GM12878 (cell line): ENCODE measurements at regions of chr6 and their contacts with region 1.

Region 1: DNA sequence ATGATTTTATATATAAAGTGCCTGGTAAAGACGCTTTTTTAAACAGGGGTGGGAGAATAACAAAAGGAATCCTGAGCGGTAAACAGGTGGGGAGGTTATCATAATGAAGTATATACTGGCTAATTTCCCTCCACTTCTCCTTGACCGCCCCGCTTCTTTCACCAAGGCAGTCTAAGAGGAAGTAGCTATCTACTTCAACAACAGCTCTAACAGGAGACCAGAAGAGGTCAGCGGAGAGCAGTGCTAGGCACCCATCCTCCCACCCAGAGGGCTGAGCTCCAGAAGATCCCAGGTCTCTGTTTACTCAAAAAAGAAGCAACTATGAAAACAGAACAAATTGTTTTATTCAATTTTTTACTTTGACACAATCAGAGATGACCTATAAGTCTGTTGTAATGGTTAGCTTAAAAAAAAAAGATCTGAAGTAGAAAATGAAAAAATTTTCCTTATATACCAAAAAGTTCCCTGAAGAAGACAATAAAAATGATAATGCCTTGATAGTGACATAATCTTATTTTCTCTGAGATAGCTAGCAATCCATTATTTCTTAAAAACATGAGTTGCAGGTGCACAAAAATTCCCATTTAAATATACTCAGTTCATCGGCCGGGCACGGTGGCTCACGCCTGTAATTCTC is 141.1 kb downstream of the PDSS2 start:
- DNase-seq: peak; percentile 7
- ATAC-seq: peak; percentile 99
- H3K4me3 ChIP-seq: no peak overlapping the region
- H3K27ac ChIP-seq: no peak overlapping the region
- H3K4me1 ChIP-seq: no peaks in the 10 kb centered on the region
- H3K27me3 ChIP-seq: no peaks in the 10 kb centered on the region
- CTCF ChIP-seq: peak; percentile 64 to 83 (median 71)
- EP300 ChIP-seq: no peak
- POLR2A ChIP-seq: no peak
- RAD21 ChIP-seq: peak; percentile 86

Region 2: GRCh38 chr6:106910999-106911949 is 406.9 kb before region 1 on chr6:
- CTCF ChIA-PET with region 1: no interaction called
- POLR2A ChIA-PET with region 1: no interaction called
- RAD21 ChIA-PET with region 1: no interaction called
- SMC1A ChIA-PET with region 1: no interaction called
- in situ Hi-C with region 1: no loop called
- intact Hi-C with region 1: no loop called
- DNase-seq: no peak
- ATAC-seq: no peak
- H3K4me3 ChIP-seq: no peak overlapping the region
- H3K27ac ChIP-seq: no peak overlapping the region
- H3K4me1 ChIP-seq: no peaks in the 10 kb centered on the region
- H3K27me3 ChIP-seq: no peaks in the 10 kb centered on the region
- CTCF ChIP-seq: no peak
- EP300 ChIP-seq: no peak
- POLR2A ChIP-seq: no peak
- RAD21 ChIP-seq: no peak

Region 3: DNA sequence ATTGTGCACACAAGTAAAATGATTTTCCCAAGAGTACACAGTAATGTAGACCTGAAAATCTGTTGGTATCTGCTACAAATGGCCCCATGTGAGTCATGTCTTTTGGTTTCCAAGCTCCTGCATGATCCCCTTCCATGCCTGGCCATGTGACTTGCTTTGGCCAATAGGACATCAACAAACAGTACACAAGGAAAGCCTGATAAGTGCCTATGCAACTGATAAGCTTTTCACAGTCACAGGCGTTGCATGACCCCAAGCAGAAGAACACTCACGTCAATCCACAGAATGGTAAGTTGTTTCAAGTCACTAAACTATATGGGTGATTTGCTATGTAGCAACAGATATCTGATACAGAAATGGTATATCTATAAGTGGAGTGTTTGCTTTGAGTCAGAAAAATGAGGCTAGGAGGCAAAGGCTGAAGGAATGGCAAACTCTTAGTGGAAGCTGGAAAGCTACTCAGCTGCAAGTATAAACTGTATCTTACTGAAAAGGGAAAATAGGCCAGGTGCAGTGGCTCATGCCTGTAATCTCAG is 42.8 kb before region 1 on chr6:
- CTCF ChIA-PET with region 1: no interaction called
- POLR2A ChIA-PET with region 1: no interaction called
- RAD21 ChIA-PET with region 1: no interaction called
- SMC1A ChIA-PET with region 1: no interaction called
- in situ Hi-C with region 1: no loop called
- intact Hi-C with region 1: no loop called
- DNase-seq: no peak
- ATAC-seq: no peak
- H3K4me3 ChIP-seq: no peak overlapping the region
- H3K27ac ChIP-seq: no peak overlapping the region
- H3K4me1 ChIP-seq: no peaks in the 10 kb centered on the region
- H3K27me3 ChIP-seq: no peaks in the 10 kb centered on the region
- CTCF ChIP-seq: no peak
- EP300 ChIP-seq: no peak
- POLR2A ChIP-seq: no peak
- RAD21 ChIP-seq: no peak

Region 4: DNA sequence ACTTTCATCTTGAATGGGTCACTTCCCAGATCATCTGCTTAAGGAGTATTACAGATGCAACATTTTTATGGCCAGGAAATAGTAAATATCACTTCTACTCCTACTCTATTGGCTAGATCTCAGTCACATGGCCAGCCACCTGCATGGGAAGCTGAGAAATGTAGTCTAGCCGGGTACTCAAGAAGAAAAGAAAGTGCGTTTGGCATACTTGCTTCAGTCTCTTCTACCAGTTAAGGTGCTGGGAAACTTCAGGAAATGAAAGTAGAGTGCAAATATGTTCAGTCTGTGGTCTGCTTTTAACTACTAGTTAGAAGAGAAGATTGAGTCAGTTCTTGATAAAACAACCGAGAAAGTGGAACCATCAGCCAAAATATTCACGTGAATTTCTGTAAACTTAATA is 11.9 kb after region 1 on chr6:
- CTCF ChIA-PET with region 1: interaction called, 68 read pairs
- POLR2A ChIA-PET with region 1: no interaction called
- RAD21 ChIA-PET with region 1: interaction called, 6 read pairs
- SMC1A ChIA-PET with region 1: interaction called, 15 read pairs
- in situ Hi-C with region 1: no loop called
- intact Hi-C with region 1: no loop called
- DNase-seq: peak; percentile 75
- ATAC-seq: peak; percentile 99
- H3K4me3 ChIP-seq: no peak overlapping the region
- H3K27ac ChIP-seq: no peak overlapping the region
- H3K4me1 ChIP-seq: peaks cover 7% of the 10 kb centered on the region; the same call in 1 of the 2 replicates
- H3K27me3 ChIP-seq: no peaks in the 10 kb centered on the region
- CTCF ChIP-seq: no peak
- EP300 ChIP-seq: 0 out of 4 replicates have a peak, but pooled peaks of 1 of the 2 experiments have one; percentile 11
- POLR2A ChIP-seq: no peak
- RAD21 ChIP-seq: no peak

Region 5: GRCh38 chr6:107418118-107418517 is 99.9 kb after region 1 on chr6:
- CTCF ChIA-PET with region 1: interaction called, 15 read pairs
- POLR2A ChIA-PET with region 1: no interaction called
- RAD21 ChIA-PET with region 1: interaction called, 6 read pairs
- SMC1A ChIA-PET with region 1: interaction called, 4 read pairs
- in situ Hi-C with region 1: no loop called
- intact Hi-C with region 1: loop called (anchors 2 kb)
- DNase-seq: no peak
- ATAC-seq: peak; percentile 82
- H3K4me3 ChIP-seq: no peak overlapping the region
- H3K27ac ChIP-seq: no peak overlapping the region
- H3K4me1 ChIP-seq: no peaks in the 10 kb centered on the region
- H3K27me3 ChIP-seq: no peaks in the 10 kb centered on the region
- CTCF ChIP-seq: peak; percentile 34 to 63 (median 61); a peak in 5 of 6 replicates
- EP300 ChIP-seq: no peak
- POLR2A ChIP-seq: no peak
- RAD21 ChIP-seq: peak; percentile 45

Region 6: GRCh38 chr6:107459283-107460082 is 141.3 kb after region 1 on chr6 and contains the start of gene PDSS2:
- CTCF ChIA-PET with region 1: interaction called, 27 read pairs
- POLR2A ChIA-PET with region 1: interaction called, 5 read pairs
- RAD21 ChIA-PET with region 1: interaction called, 19 read pairs
- SMC1A ChIA-PET with region 1: interaction called, 21 read pairs
- in situ Hi-C with region 1: no loop called
- intact Hi-C with region 1: loop called (anchors 5 kb)
- DNase-seq: peak; percentile 91
- ATAC-seq: peak; percentile 94
- H3K4me3 ChIP-seq: peak within 1 kb of the TSS; percentile 94
- H3K27ac ChIP-seq: peak within 1 kb of the TSS; percentile 90
- H3K4me1 ChIP-seq: no peaks in the 10 kb centered on the region; the same call in 1 of the 2 replicates
- H3K27me3 ChIP-seq: no peaks in the 10 kb centered on the region
- CTCF ChIP-seq: peak; percentile 32 to 54 (median 51)
- EP300 ChIP-seq: no peak
- POLR2A ChIP-seq: peak; percentile 97
- RAD21 ChIP-seq: peak; percentile 10; the same call in 1 of the 2 replicates
- polyA plus RNA-seq, gene PDSS2: 7.9 to 9.1 TPM